ENCODE measurements at regions of chr2 and their contacts with region 1.

Region 1: GRCh38 chr2:174771631-174772471 is 7.6 kb upstream of the CHRNA1 start:
- DNase-seq: peak; percentile 72
- H3K4me3 Mint-ChIP-seq: no peak overlapping the region
- H3K27ac Mint-ChIP-seq: no peak overlapping the region
- H3K4me1 Mint-ChIP-seq: peaks cover 9% of the 10 kb centered on the region
- H3K27me3 Mint-ChIP-seq: no peaks in the 10 kb centered on the region

Region 2: DNA sequence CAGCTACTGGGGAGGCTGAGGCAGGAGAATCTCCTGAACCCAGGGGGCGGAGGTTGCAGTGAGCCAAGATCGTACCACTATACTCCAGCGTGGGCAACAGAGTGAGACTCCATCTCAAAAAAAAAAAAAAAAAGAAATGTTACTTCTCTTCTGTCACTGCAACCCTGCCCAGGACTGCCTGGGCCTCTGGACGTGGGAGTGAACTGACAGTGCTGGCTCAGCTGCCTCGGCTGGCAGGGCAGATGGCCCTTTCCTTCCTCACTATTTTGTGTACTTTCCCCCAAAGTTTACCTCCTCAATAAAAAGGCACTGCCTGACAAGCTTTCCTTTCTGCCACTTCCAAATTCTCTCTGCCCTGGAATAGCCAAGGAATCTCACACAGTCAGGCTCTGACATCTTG is 272.5 kb before region 1 on chr2:
- CTCF ChIA-PET with region 1: no interaction called
- POLR2A ChIA-PET with region 1: no interaction called
- intact Hi-C with region 1: no loop called
- DNase-seq: no peak
- H3K4me3 Mint-ChIP-seq: no peak overlapping the region
- H3K27ac Mint-ChIP-seq: no peak overlapping the region
- H3K4me1 Mint-ChIP-seq: peaks cover 22% of the 10 kb centered on the region
- H3K27me3 Mint-ChIP-seq: no peaks in the 10 kb centered on the region

Region 3: DNA sequence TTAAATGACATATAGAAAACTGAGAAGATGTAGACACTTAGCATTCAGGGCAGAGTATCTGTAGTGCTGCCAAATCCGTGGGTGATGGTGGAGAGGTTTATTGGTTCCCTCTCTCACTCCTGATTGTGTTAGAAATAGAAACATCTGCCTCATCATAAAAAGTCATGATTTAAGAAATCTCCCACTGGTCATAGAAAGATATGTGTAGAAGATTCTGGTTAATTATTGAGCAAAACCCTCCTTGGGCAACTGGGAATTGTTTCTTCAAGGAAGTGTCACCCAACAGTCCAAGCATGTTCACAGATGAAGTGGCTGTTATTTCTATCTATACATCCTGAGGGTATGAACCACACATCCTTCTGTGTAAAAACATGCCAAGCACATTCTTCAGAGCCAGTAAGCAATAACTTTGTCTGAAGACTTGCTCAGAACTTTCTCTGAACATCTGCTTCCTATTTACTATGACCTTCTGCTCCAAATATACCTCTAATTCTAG is 26.0 kb after region 1 on chr2:
- CTCF ChIA-PET with region 1: interaction called, 29 read pairs
- POLR2A ChIA-PET with region 1: interaction called, 3 read pairs
- intact Hi-C with region 1: no loop called
- DNase-seq: no peak
- H3K4me3 Mint-ChIP-seq: no peak overlapping the region
- H3K27ac Mint-ChIP-seq: no peak overlapping the region
- H3K4me1 Mint-ChIP-seq: peaks cover 24% of the 10 kb centered on the region
- H3K27me3 Mint-ChIP-seq: no peaks in the 10 kb centered on the region

Region 4: GRCh38 chr2:174985630-174986029 is 213.8 kb after region 1 on chr2:
- CTCF ChIA-PET with region 1: interaction called, 58 read pairs
- POLR2A ChIA-PET with region 1: no interaction called
- intact Hi-C with region 1: loop called (anchors 1 kb)
- DNase-seq: no peak
- H3K4me3 Mint-ChIP-seq: no peak overlapping the region
- H3K27ac Mint-ChIP-seq: no peak overlapping the region
- H3K4me1 Mint-ChIP-seq: peaks cover 2% of the 10 kb centered on the region
- H3K27me3 Mint-ChIP-seq: peaks cover 3% of the 10 kb centered on the region

Region 5: DNA sequence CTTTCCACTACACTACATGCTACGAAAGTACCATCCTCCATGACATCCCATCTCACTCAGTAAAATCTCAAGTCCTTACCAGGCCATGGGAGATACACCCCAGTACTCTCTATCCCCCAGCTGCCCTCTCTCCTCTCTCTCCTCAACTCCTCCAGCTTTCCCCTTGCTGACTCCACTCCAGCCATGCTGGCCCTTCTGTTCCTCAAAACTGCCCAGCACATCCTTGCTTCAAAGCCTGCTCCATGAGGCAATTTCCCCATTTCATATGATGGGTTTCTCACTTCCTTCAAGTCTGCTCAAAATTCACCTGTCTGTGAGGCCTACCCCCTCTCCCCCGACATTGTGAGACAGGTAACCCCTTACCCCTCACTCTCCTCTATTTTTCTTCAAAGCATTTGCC is 224.8 kb after region 1 on chr2:
- CTCF ChIA-PET with region 1: interaction called, 58 read pairs
- POLR2A ChIA-PET with region 1: no interaction called
- intact Hi-C with region 1: no loop called
- DNase-seq: no peak
- H3K4me3 Mint-ChIP-seq: no peak overlapping the region
- H3K27ac Mint-ChIP-seq: no peak overlapping the region
- H3K4me1 Mint-ChIP-seq: peaks cover 3% of the 10 kb centered on the region
- H3K27me3 Mint-ChIP-seq: peaks cover 16% of the 10 kb centered on the region

Region 6: DNA sequence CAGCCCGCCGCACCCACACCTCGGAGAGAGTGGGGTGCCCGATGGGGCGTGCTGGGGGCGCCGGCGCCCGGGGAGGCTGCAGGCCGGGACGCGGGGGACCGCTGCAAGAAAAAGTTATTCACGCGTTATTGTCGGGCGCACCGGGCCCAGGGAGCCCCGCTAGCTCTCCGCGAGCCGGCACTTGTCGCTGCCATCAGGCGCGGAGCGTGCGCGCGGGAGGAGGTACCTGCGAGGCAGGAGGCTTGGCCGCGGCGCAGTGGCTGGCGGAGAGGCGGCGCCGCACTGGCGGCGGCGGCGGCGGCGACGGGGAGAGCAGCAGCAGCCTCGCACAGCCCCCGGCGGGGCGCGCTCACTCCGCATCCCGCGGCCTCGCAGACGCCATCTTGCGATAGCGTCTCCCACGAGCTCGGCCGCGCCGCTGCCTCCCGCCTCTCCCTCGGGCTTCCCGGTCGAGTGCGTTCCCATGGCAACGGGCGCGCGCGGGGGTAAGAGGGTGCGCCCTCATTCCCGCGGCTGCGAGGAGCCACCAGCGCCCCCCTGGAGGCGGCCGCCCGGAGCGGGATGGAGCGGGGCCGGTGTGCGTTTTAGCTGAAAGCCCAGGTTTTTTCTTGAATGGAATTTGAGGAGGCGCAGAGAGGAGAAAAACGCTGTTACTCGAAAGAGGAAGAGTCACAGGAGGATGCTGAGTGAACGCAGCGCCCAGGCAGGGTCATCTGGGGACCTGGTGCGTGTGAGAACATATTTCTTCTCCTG is 233.3 kb after region 1 on chr2 and contains the start of gene CHN1:
- CTCF ChIA-PET with region 1: interaction called, 14 read pairs
- POLR2A ChIA-PET with region 1: no interaction called
- intact Hi-C with region 1: no loop called
- DNase-seq: peak; percentile 73
- H3K4me3 Mint-ChIP-seq: peak within 1 kb of the TSS; percentile 74
- H3K27ac Mint-ChIP-seq: no peak within 1 kb of the TSS
- H3K4me1 Mint-ChIP-seq: peaks cover 4% of the 10 kb centered on the region
- H3K27me3 Mint-ChIP-seq: peaks cover 48% of the 10 kb centered on the region
- total RNA-seq, gene CHN1: 3.8 to 6.2 TPM